ENCODE measurements at regions of chr6 and their contacts with region 1.

Region 1: GRCh38 chr6:36442671-36443470 is at the starts of genes KCTD20 and PXT1:
- DNase-seq: peak; percentile 83
- H3K4me3 Mint-ChIP-seq: peak within 1 kb of the TSS; percentile 87
- H3K27ac Mint-ChIP-seq: peak within 1 kb of the TSS; percentile 88
- H3K4me1 Mint-ChIP-seq: peaks cover 27% of the 10 kb centered on the region
- H3K27me3 Mint-ChIP-seq: no peaks in the 10 kb centered on the region
- CTCF ChIP-seq: no peak
- total RNA-seq, gene KCTD20: 46.6 and 52.0 TPM in 2 replicates
- total RNA-seq, gene PXT1: 0.15 TPM in 1 of 2 replicates, not detected in the other

Region 2: GRCh38 chr6:36402481-36402880 is 40.4 kb before region 1 on chr6:
- CTCF ChIA-PET with region 1: no interaction called
- POLR2A ChIA-PET with region 1: no interaction called
- intact Hi-C with region 1: no loop called
- DNase-seq: no peak
- H3K4me3 Mint-ChIP-seq: no peak overlapping the region
- H3K27ac Mint-ChIP-seq: no peak overlapping the region
- H3K4me1 Mint-ChIP-seq: no peaks in the 10 kb centered on the region
- H3K27me3 Mint-ChIP-seq: peaks cover 11% of the 10 kb centered on the region
- CTCF ChIP-seq: no peak

Region 3: GRCh38 chr6:36428911-36429310 is 14.0 kb before region 1 on chr6:
- CTCF ChIA-PET with region 1: interaction called, 9 read pairs
- POLR2A ChIA-PET with region 1: interaction called, 68 read pairs
- intact Hi-C with region 1: no loop called
- DNase-seq: no peak
- H3K4me3 Mint-ChIP-seq: no peak overlapping the region
- H3K27ac Mint-ChIP-seq: no peak overlapping the region
- H3K4me1 Mint-ChIP-seq: peaks cover 15% of the 10 kb centered on the region
- H3K27me3 Mint-ChIP-seq: no peaks in the 10 kb centered on the region
- CTCF ChIP-seq: peak; percentile 10

Region 4: GRCh38 chr6:37525460-37526357 is 1082.8 kb after region 1 on chr6:
- CTCF ChIA-PET with region 1: no interaction called
- POLR2A ChIA-PET with region 1: no interaction called
- intact Hi-C with region 1: no loop called
- DNase-seq: peak; percentile 38
- H3K4me3 Mint-ChIP-seq: no peak overlapping the region
- H3K27ac Mint-ChIP-seq: no peak overlapping the region
- H3K4me1 Mint-ChIP-seq: peaks cover 18% of the 10 kb centered on the region
- H3K27me3 Mint-ChIP-seq: peaks cover 16% of the 10 kb centered on the region
- CTCF ChIP-seq: no peak

Measured in MCF 10A (cell line).